ENCODE measurements at regions of chr7 and their contacts with region 1.

Region 1: DNA sequence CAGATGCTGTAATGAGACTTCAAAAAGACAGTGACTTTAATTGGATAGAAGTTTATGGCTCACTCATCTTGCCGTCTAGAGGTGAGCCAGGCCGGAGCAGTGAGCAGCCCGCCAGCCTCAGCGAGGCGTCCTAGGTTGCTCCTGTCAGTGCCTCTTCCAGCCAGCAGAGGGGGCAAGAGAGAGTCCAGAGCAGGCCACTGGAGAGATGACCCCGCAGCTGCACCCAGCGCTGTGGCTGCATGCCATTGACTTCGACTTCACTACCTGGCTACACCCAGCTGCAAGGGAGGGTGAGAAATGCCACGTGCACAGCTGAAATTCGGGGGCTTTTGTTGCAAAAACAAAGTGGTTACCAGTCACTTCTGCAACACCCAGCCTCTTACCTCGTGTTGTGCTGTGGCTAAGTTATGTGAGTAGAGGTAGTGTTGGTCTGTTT is 26.5 kb downstream of the NUB1 start:
- DNase-seq: peak; percentile 48
- ATAC-seq: peak; percentile 100
- H3K4me3 ChIP-seq: no peak overlapping the region
- H3K27ac ChIP-seq: no peak overlapping the region
- H3K4me1 ChIP-seq: peaks cover 2 to 11% of the 10 kb centered on the region in 2 experiments; a peak in 2 of 4 replicates
- H3K27me3 ChIP-seq: no peaks in the 10 kb centered on the region
- CTCF ChIP-seq: peak; percentile 93
- POLR2A ChIP-seq: no peak
- RAD21 ChIP-seq: peak; percentile 91

Region 2: GRCh38 chr7:151448261-151449252 is 80.4 kb after region 1 on chr7:
- CTCF ChIA-PET with region 1: interaction called, 40 read pairs
- POLR2A ChIA-PET with region 1: interaction called, 3 read pairs
- RAD21 ChIA-PET with region 1: interaction called, 6 to 12 read pairs
- intact Hi-C with region 1: loop called (anchors 1 kb)
- DNase-seq: peak; percentile 13
- ATAC-seq: peak; percentile 88
- H3K4me3 ChIP-seq: peak overlapping the region; percentile 34 to 53
- H3K27ac ChIP-seq: peak overlapping the region; percentile 19; the same call in 1 of the 2 replicates
- H3K4me1 ChIP-seq: peaks cover 13 to 33% of the 10 kb centered on the region in 2 experiments; a peak in 3 of 4 replicates
- H3K27me3 ChIP-seq: no peaks in the 10 kb centered on the region
- CTCF ChIP-seq: peak; percentile 70 to 94 (median 76)
- POLR2A ChIP-seq: no peak
- RAD21 ChIP-seq: peak; percentile 93